Activated CD8-positive, alpha-beta T cell treated with anti-CD3 and anti-CD28 coated beads for 36 hours (primary cell): ENCODE measurements at regions of chr2 and their contacts with region 1.

Region 1: GRCh38 chr2:198053776-198054698 is 249.6 kb downstream of the PLCL1 start:
- DNase-seq: peak; percentile 65
- ATAC-seq: peak; percentile 64
- H3K4me3 Mint-ChIP-seq: no peak overlapping the region
- H3K27ac Mint-ChIP-seq: no peak overlapping the region
- H3K4me1 Mint-ChIP-seq: peaks cover 2% of the 10 kb centered on the region
- H3K27me3 Mint-ChIP-seq: no peaks in the 10 kb centered on the region
- CTCF ChIP-seq: peak; percentile 57

Region 2: GRCh38 chr2:197804049-197804757 is 249.8 kb before region 1 on chr2 and contains the start of gene PLCL1:
- CTCF ChIA-PET with region 1: no interaction called
- POLR2A ChIA-PET with region 1: no interaction called
- intact Hi-C with region 1: loop called (anchors 5 kb)
- DNase-seq: peak; percentile 93
- ATAC-seq: peak; percentile 99
- H3K4me3 Mint-ChIP-seq: peak within 1 kb of the TSS; percentile 85
- H3K27ac Mint-ChIP-seq: peak within 1 kb of the TSS; percentile 71
- H3K4me1 Mint-ChIP-seq: peaks cover 40% of the 10 kb centered on the region
- H3K27me3 Mint-ChIP-seq: peaks cover 8% of the 10 kb centered on the region
- CTCF ChIP-seq: no peak
- total RNA-seq, gene PLCL1: 0.68 to 0.69 TPM